Calu3 (cell line): ENCODE measurements at regions of chr6 and their contacts with region 1.

Region 1: GRCh38 chr6:84568971-84569370 is 195.4 kb downstream of the TBX18 start:
- DNase-seq: peak; percentile 12
- H3K4me3 Mint-ChIP-seq: no peak overlapping the region
- H3K27ac Mint-ChIP-seq: no peak overlapping the region
- H3K4me1 Mint-ChIP-seq: no peaks in the 10 kb centered on the region
- H3K27me3 Mint-ChIP-seq: no peaks in the 10 kb centered on the region
- CTCF ChIP-seq: peak; percentile 15

Region 2: DNA sequence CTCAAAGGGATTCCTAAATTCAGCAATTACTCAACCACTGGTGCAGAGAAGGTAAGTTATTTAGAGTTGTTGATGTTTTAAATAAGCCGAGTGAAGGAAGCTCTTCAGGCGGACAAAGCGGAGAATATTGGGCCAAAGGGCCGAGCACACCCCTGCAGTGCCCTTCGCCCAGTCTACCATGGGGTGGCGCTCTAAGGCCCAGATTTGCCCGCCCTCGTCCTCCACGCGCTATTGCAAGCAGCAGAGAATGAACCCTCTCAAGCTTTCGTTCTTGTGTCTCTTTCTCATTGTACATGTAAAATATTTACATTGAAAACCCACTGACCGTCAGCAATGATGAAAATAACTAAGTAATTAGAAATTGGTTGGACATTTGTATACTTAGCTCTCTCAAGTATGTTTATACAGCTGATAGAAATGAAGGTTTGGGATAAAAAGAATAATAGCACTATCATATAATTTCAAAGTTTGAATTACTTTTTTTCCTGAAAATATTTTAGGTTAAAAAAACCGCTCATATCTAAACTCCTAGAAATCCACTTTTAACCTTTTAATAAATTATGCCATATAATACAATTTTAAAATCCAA is 146.5 kb before region 1 on chr6:
- CTCF ChIA-PET with region 1: interaction called, 23 read pairs
- intact Hi-C with region 1: loop called (anchors 1 kb)
- DNase-seq: peak; percentile 84
- H3K4me3 Mint-ChIP-seq: no peak overlapping the region
- H3K27ac Mint-ChIP-seq: no peak overlapping the region
- H3K4me1 Mint-ChIP-seq: peaks cover 8% of the 10 kb centered on the region
- H3K27me3 Mint-ChIP-seq: no peaks in the 10 kb centered on the region
- CTCF ChIP-seq: peak; percentile 89

Region 3: GRCh38 chr6:84428300-84428907 is 140.6 kb before region 1 on chr6:
- CTCF ChIA-PET with region 1: interaction called, 7 read pairs
- intact Hi-C with region 1: loop called (anchors 1 kb)
- DNase-seq: peak; percentile 71
- H3K4me3 Mint-ChIP-seq: no peak overlapping the region
- H3K27ac Mint-ChIP-seq: no peak overlapping the region
- H3K4me1 Mint-ChIP-seq: peaks cover 9% of the 10 kb centered on the region
- H3K27me3 Mint-ChIP-seq: no peaks in the 10 kb centered on the region
- CTCF ChIP-seq: peak; percentile 78

Region 4: DNA sequence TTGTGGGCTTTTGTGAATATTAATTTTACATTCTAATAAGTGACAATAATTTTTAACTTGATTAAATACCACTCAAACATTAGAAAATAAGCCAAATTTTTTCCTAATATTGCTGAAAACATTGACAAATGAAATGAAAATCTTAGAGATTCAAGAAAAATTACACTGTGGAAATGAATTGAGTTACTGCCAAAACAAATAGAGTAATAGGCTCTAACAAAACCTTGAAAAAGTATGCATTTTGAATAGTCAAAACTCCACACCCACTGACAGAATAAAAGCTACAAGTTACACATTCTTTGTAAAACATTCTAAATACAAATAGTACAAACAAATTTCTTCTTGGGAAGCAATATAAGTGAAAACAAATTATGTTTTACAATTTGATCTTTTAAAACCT is 189.5 kb after region 1 on chr6:
- CTCF ChIA-PET with region 1: no interaction called
- intact Hi-C with region 1: loop called (anchors 5 kb)
- DNase-seq: no peak
- H3K4me3 Mint-ChIP-seq: no peak overlapping the region
- H3K27ac Mint-ChIP-seq: peak overlapping the region; percentile 50
- H3K4me1 Mint-ChIP-seq: peaks cover 14% of the 10 kb centered on the region
- H3K27me3 Mint-ChIP-seq: no peaks in the 10 kb centered on the region
- CTCF ChIP-seq: no peak

Region 5: GRCh38 chr6:84774157-84774984 is 205.4 kb after region 1 on chr6:
- CTCF ChIA-PET with region 1: interaction called, 6 read pairs
- intact Hi-C with region 1: loop called (anchors 5 kb)
- DNase-seq: peak; percentile 93
- H3K4me3 Mint-ChIP-seq: peak overlapping the region; percentile 98
- H3K27ac Mint-ChIP-seq: peak overlapping the region; percentile 93
- H3K4me1 Mint-ChIP-seq: peaks cover 14% of the 10 kb centered on the region
- H3K27me3 Mint-ChIP-seq: no peaks in the 10 kb centered on the region
- CTCF ChIP-seq: peak; percentile 82

Region 6: DNA sequence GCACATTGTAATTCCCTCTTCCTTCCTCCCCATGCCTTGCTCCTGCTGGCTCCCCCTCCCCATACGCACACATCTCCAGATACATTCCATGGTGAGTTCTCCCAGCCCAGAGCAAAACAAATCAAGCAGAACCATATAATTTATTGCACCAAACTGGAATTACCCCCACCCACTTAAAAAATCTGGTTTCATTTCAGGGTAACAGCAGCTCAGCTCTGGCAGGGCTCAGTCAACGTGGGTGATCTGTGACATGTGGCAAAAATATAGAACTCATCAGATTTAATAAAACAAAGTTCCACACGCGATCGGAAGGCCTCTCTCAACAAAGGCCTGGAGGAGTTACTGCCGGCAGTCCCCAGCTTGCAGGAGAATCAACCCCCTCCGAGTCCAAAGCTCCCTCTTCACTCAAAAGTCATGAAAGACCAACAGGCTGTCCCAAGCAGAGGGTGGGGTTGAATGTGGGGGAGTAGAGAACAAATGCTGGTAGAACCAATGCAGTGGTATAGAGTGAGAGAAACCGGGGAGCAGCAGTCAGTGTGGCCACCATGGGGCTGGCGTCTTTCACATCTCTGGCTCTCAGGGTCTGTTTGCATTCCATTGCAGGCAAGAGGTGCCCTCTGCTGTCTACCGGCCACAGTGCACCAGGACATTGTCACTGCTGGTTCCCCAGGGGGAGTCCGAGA is 557.7 kb after region 1 on chr6:
- CTCF ChIA-PET with region 1: no interaction called
- intact Hi-C with region 1: loop called (anchors 5 kb)
- DNase-seq: peak; percentile 78
- H3K4me3 Mint-ChIP-seq: no peak overlapping the region
- H3K27ac Mint-ChIP-seq: peak overlapping the region; percentile 43
- H3K4me1 Mint-ChIP-seq: peaks cover 15% of the 10 kb centered on the region
- H3K27me3 Mint-ChIP-seq: no peaks in the 10 kb centered on the region
- CTCF ChIP-seq: peak; percentile 81